Activated CD4-positive, alpha-beta T cell treated with anti-CD3 and anti-CD28 coated beads for 36 hours (primary cell): ENCODE measurements at regions of chr16 and their contacts with region 1.

Region 1: DNA sequence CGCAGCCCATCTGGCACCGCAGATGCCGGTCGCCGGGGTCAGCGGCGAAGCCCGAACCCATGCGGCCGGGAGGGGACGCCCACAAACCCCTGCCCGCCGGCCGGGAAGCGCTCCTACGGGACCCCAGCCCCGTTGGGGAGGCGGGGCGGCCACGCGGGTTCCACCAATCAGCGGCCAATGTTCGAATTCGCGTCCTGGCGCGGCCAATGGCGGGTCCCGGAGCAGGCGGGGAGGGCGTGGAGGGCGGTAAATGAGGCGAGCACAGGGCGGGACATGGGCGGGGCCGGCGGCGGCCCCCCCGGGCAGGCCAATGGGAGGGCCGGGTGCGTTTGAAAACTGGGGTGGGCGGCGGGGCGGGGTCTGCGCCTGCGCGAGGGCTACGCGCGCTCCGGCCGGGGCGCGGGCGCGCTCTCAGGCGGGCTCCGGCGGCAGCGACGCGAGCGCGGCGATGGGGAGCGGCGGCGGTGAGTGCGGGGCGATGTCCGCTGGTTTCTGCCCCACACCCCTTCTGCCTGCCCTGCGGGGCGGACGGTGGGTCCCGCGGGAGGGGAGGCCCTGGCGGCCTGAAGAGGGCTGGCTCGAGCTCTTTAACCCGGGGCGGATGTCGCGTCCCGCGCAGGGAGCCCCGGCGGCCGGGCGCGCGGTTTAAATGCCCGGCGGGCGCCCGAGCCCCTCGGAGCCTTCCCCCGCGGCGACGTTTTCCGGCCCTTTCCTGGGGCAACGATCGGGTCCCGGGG is at the start of gene CCNF:
- DNase-seq: peak; percentile 99
- ATAC-seq: peak; percentile 97
- H3K4me3 Mint-ChIP-seq: peak within 1 kb of the TSS; percentile 97
- H3K27ac Mint-ChIP-seq: peak within 1 kb of the TSS; percentile 76
- H3K4me1 Mint-ChIP-seq: peaks cover 16% of the 10 kb centered on the region
- H3K27me3 Mint-ChIP-seq: no peaks in the 10 kb centered on the region
- total RNA-seq, gene CCNF: 52.2 to 53.4 TPM

Region 2: DNA sequence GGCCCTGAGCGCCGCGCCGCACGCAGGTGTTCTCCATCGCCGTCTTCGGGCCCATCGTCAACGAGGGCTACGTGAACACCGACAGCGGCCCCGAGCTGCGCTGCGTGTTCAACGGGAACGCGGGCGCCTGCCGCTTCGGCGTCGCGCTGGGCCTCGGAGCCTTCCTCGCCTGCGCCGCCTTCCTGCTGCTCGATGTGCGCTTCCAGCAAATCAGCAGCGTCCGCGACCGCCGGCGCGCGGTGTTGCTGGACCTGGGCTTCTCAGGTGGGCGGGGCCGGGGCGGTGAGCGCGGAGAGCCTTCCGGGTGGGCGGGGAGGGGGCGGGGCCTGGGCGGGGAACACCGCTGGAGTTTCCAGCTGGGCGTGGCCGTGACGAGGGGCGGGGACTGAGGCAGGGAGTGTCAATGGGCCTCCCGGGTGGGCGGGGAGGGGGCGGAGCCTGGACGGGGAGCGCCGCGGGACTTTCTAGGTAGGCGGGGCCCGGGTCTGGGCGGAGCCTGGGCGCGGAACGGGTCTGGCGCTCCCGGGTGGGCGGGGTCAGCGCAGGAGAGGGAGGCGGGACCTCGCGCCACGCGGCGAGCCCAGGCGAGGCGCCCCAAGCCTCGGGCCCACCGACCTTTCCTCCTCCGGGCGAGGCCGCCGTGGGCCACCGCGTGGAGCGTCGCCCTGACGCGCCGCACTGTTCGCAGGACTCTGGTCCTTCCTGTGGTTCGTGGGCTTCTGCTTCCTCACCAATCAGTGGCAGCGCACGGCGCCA is 437.1 kb before region 1 on chr16:
- CTCF ChIA-PET with region 1: no interaction called
- POLR2A ChIA-PET with region 1: no interaction called
- intact Hi-C with region 1: loop called in 1 of 2 experiments (anchors 1 kb)
- DNase-seq: peak; percentile 100
- ATAC-seq: peak; percentile 70
- H3K4me3 Mint-ChIP-seq: peak overlapping the region; percentile 56
- H3K27ac Mint-ChIP-seq: no peak overlapping the region
- H3K4me1 Mint-ChIP-seq: peaks cover 27% of the 10 kb centered on the region
- H3K27me3 Mint-ChIP-seq: peaks cover 15% of the 10 kb centered on the region

Region 3: GRCh38 chr16:2213817-2214720 is 215.1 kb before region 1 on chr16:
- CTCF ChIA-PET with region 1: no interaction called
- POLR2A ChIA-PET with region 1: no interaction called
- intact Hi-C with region 1: loop called in 1 of 2 experiments (anchors 1 kb)
- DNase-seq: peak; percentile 40
- ATAC-seq: no peak
- H3K4me3 Mint-ChIP-seq: peak overlapping the region; percentile 79
- H3K27ac Mint-ChIP-seq: peak overlapping the region; percentile 45
- H3K4me1 Mint-ChIP-seq: peaks cover 18% of the 10 kb centered on the region
- H3K27me3 Mint-ChIP-seq: no peaks in the 10 kb centered on the region

Region 4: GRCh38 chr16:2278956-2279800 is 150.0 kb before region 1 on chr16:
- CTCF ChIA-PET with region 1: no interaction called
- POLR2A ChIA-PET with region 1: no interaction called
- intact Hi-C with region 1: no loop called
- DNase-seq: no peak
- ATAC-seq: no peak
- H3K4me3 Mint-ChIP-seq: no peak overlapping the region
- H3K27ac Mint-ChIP-seq: no peak overlapping the region
- H3K4me1 Mint-ChIP-seq: no peaks in the 10 kb centered on the region
- H3K27me3 Mint-ChIP-seq: no peaks in the 10 kb centered on the region

Region 5: DNA sequence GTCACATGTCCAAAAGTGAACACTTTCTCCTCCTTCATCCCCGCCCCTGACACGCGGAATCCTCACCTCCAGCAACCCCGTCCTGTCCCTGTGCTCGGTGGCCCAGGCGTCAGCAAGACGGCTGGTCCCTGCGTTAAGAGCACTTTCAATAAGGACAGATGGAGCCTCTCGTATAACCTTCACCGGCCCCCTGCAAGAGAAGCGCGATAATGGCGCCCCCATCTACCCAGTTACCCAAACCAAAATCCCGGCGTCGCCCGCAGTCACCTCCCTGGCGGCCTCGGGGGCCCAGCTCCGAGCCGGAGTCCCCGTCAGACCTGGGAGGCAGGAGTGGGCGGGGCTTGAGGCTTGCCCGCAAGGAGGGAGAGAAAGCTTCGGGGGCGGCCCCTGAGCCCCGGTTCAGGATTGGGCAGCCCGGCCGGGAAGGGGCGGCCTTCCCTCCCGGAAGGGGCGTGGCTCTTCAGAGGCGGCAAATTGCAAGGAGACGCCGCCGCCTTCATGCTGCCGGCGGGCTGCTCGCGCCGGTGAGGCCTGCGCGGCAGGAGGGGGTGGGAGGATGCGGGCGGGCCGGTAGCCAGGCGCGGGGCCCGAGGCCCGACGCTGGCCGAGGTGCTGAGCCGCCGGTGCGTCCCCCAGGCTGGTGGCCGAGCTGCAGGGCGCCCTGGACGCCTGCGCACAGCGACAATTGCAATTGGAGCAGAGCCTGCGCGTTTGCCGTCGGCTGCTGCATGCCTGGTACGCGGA is 30.6 kb after region 1 on chr16 and contains the start of gene TEDC2:
- CTCF ChIA-PET with region 1: interaction called, 3 read pairs
- POLR2A ChIA-PET with region 1: interaction called, 3 read pairs
- intact Hi-C with region 1: loop called in 1 of 2 experiments (anchors 1 kb)
- DNase-seq: peak; percentile 99
- ATAC-seq: peak; percentile 98
- H3K4me3 Mint-ChIP-seq: peak within 1 kb of the TSS; percentile 73
- H3K27ac Mint-ChIP-seq: peak within 1 kb of the TSS; percentile 67
- H3K4me1 Mint-ChIP-seq: peaks cover 6% of the 10 kb centered on the region
- H3K27me3 Mint-ChIP-seq: no peaks in the 10 kb centered on the region
- total RNA-seq, gene TEDC2: 21.0 to 23.1 TPM

Region 6: DNA sequence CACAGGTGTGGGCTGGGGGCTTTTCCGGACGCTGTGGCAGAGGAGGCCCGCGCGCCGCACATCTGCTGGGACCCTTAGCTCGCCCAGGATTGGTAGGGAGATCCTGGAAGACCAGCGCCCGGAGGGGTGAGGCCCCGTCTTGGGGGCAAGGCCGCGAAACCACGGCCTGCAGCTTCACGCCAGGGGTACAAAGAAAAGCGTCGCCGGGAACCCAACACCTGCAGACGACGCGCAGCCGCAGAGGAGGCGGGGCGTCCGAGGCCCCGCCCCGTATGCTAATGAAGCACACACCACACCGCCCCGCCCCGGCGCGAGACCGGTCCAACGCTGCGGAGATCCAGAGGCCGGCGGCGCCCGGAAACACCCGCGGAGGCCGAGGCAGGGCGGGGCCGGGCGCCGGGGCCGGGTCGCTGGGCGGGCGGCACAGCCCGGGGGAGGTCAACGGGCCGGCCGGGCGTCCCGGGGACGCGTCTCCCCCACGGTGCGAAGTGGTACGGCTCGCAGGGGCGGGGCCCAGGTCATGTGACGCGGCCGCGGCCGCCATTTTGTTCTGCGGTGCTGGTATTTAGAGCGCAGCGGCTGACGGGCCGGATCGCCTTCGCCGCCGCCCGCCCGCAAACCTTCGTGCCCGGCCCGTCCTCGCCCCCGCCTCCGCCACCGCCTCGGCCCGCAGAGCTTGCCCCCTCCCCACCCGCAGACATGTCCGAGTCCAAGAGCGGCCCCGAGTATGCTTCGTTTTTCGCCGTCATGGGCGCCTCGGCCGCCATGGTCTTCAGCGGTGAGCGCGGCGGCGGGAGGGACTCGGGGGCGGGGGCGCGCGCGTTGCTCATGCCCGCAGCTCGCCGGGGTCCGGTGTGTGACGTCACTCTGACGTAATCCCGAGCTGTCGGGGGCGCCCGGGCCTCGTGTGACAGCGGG is 84.5 kb after region 1 on chr16 and contains the start of gene ATP6V0C:
- CTCF ChIA-PET with region 1: no interaction called
- POLR2A ChIA-PET with region 1: no interaction called
- intact Hi-C with region 1: loop called in 1 of 2 experiments (anchors 1 kb)
- DNase-seq: peak; percentile 95
- ATAC-seq: peak; percentile 90
- H3K4me3 Mint-ChIP-seq: peak within 1 kb of the TSS; percentile 93
- H3K27ac Mint-ChIP-seq: peak within 1 kb of the TSS; percentile 95
- H3K4me1 Mint-ChIP-seq: peaks cover 44% of the 10 kb centered on the region
- H3K27me3 Mint-ChIP-seq: no peaks in the 10 kb centered on the region
- total RNA-seq, gene ATP6V0C: 91.7 to 130 TPM

Region 7: GRCh38 chr16:2752035-2752849 is 323.0 kb after region 1 on chr16 and contains the start of gene SRRM2:
- CTCF ChIA-PET with region 1: no interaction called
- POLR2A ChIA-PET with region 1: no interaction called
- intact Hi-C with region 1: loop called in 1 of 2 experiments (anchors 1 kb)
- DNase-seq: peak; percentile 97
- ATAC-seq: peak; percentile 90
- H3K4me3 Mint-ChIP-seq: peak within 1 kb of the TSS; percentile 99
- H3K27ac Mint-ChIP-seq: peak within 1 kb of the TSS; percentile 98
- H3K4me1 Mint-ChIP-seq: peaks cover 45% of the 10 kb centered on the region
- H3K27me3 Mint-ChIP-seq: no peaks in the 10 kb centered on the region
- total RNA-seq, gene SRRM2: 517 to 598 TPM